ENCODE measurements at regions of chr14 and their contacts with region 1.

Region 1: DNA sequence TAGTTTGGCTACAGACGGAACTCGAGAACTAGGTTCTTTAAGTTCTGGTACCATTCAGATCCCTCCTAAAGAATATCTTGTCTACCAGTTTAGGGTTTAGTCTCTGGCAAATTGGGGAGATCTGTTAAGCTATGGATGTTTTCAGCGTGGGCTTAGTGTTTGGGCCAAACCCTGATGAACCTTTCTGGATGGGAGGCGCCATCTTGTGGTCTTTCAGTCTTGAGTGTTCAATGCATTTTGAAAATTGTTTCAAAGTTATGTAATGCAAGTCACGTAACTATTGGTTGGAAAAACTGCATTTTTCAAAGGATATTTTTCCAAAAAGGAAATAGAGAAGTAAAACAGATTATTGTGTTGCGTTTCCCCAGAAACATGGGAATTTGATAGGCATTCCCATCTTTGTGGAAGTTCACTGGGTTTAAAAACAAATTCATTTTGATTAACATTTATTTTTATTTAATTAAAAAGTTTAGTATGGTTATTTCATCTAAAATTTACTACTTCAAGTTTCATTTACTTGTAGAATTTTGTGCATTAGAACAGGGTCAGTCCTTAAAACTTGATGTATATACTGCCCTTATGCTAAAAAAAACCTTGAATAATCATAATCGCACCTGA is 169.0 kb downstream of the PRIMA1 start:
- DNase-seq: peak; percentile 52
- CTCF ChIP-seq: peak; percentile 70

Region 2: GRCh38 chr14:93220509-93220908 is 398.8 kb before region 1 on chr14:
- in situ Hi-C with region 1: loop called (anchors 10 kb)
- DNase-seq: no peak
- CTCF ChIP-seq: no peak

Region 3: DNA sequence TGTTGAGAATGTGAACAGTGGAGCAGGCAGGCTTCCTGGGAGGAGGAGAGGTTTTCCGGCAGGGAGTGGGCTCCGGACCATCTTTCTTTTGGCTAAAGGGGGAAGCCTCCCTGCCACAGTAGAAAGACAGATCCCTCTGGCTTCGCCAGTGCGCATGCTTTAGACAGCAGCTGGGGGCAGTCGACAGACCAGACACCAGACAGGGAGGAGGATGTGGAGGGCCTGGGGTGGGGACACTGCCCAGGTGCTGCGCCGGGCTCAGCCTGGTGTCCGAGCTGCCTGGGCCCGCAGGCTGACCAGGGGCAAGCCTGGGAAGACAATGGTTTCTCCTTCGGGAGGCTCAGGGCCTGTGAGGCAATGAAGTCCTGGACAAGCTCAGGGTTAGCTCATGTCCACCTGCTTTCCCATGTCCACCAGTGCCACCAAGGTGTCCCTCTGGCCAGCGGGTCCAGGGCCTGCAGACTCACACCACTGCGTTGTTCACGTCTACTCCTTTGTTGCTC is 101.7 kb after region 1 on chr14:
- in situ Hi-C with region 1: no loop called
- DNase-seq: no peak
- CTCF ChIP-seq: no peak